Heart right ventricle (tissue), 16 donors: ENCODE measurements at regions of chr17 and their contacts with region 1.

Region 1: GRCh38 chr17:41127371-41127770 is 3.4 kb upstream of the KRTAP4-12 start:
- DNase-seq: no peak
- ATAC-seq: no peak
- H3K4me3 ChIP-seq: no peak overlapping the region
- H3K27ac ChIP-seq: no peak overlapping the region
- H3K4me1 ChIP-seq: no peaks in the 10 kb centered on the region
- H3K27me3 ChIP-seq: peaks cover 0 to 22% (median under 1%) of the 10 kb centered on the region in 7 donors
- CTCF ChIP-seq: no peak

Region 2: GRCh38 chr17:40828454-40829039 is 298.8 kb before region 1 on chr17:
- intact Hi-C with region 1: no loop called
- DNase-seq: no peak
- ATAC-seq: peak in 6 of 8 donors; percentile 61 to 92 (median 64)
- H3K4me3 ChIP-seq: no peak overlapping the region
- H3K27ac ChIP-seq: peak overlapping the region; percentile 42 to 75 (median 50)
- H3K4me1 ChIP-seq: peaks cover 0 to 40% (median 14%) of the 10 kb centered on the region in 9 donors
- H3K27me3 ChIP-seq: no peaks in the 10 kb centered on the region
- CTCF ChIP-seq: no peak

Region 3: DNA sequence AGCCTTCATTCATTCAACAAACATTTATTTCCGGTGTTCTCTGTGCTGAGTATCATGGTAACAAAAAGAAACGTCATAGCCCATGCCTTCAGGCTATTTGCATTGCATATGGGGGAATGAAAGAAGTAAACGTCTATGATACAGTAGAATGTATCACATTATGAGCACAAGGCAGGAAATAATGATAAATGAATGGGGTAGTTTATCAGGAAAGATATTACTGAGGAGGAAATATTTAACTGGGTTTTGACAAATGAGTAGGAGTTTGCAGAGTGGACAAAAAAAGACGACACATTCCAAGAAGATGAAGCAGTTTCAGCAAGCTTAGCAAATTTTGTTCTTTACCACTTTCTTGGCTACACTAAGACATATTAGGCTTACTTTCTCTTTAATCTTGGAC is 44.7 kb before region 1 on chr17:
- intact Hi-C with region 1: no loop called
- DNase-seq: no peak
- ATAC-seq: no peak
- H3K4me3 ChIP-seq: no peak overlapping the region
- H3K27ac ChIP-seq: no peak overlapping the region
- H3K4me1 ChIP-seq: no peaks in the 10 kb centered on the region
- H3K27me3 ChIP-seq: peaks cover 0 to 22% (median 5%) of the 10 kb centered on the region in 7 donors
- CTCF ChIP-seq: no peak

Region 4: DNA sequence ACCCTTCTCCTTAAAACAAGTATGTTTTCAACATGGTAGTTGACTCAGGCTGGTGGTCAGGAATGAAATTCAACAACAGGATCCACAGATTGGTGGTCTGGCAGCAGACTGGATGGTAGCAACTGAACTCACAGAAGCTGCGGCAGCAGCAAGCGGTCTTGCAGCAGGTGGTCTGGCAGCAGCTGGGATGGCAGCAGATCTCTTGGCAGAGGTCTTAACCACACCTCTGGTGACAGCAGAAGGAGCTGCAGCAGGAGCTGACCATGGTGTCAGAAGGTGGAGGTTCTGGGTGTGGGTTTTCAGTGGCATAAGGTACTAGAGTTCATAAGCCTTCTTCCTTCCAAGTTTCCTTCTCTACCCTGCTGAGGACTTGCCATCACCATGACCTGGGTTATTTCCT is 59.5 kb after region 1 on chr17:
- intact Hi-C with region 1: loop called in 1 of 10 experiments (anchors 10 kb)
- DNase-seq: no peak
- ATAC-seq: no peak
- H3K4me3 ChIP-seq: no peak overlapping the region
- H3K27ac ChIP-seq: no peak overlapping the region
- H3K4me1 ChIP-seq: no peaks in the 10 kb centered on the region
- H3K27me3 ChIP-seq: peaks cover 0 to 49% (median 19%) of the 10 kb centered on the region in 7 donors
- CTCF ChIP-seq: no peak